Naive thymus-derived CD4-positive, alpha-beta T cell (primary cell): ENCODE measurements at regions of chr1 and their contacts with region 1.

Region 1: DNA sequence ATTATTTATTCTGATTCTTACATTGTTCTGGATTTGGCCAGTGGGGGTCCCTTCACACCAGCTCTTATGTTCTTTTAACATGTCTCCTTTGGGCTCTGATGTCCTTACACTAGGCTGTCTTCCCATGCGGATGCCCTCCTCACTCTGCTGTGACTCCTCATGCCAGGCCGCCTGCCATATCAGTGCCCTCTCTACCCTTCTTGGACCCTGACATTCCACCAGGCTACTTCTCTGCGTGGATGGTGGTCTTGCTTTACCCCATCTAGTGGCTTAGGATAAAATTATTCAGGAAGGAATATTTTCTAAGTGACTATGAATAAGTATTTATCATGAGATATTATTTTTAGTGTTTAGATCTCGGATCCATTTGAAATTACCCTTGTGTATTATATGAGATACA is 21.2 kb downstream of the ATF6 start:
- DNase-seq: no peak
- ATAC-seq: no peak
- H3K4me3 ChIP-seq: no peak overlapping the region
- H3K4me3 Mint-ChIP-seq: no peak overlapping the region
- H3K27ac ChIP-seq: no peak overlapping the region
- H3K27ac Mint-ChIP-seq: peak overlapping the region in 1 of 9 donors; percentile 63
- H3K4me1 ChIP-seq: no peaks in the 10 kb centered on the region
- H3K4me1 Mint-ChIP-seq: peaks cover 0 to 18% (median 6%) of the 10 kb centered on the region in 7 donors
- H3K27me3 ChIP-seq: no peaks in the 10 kb centered on the region
- H3K27me3 Mint-ChIP-seq: no peaks in the 10 kb centered on the region

Region 2: DNA sequence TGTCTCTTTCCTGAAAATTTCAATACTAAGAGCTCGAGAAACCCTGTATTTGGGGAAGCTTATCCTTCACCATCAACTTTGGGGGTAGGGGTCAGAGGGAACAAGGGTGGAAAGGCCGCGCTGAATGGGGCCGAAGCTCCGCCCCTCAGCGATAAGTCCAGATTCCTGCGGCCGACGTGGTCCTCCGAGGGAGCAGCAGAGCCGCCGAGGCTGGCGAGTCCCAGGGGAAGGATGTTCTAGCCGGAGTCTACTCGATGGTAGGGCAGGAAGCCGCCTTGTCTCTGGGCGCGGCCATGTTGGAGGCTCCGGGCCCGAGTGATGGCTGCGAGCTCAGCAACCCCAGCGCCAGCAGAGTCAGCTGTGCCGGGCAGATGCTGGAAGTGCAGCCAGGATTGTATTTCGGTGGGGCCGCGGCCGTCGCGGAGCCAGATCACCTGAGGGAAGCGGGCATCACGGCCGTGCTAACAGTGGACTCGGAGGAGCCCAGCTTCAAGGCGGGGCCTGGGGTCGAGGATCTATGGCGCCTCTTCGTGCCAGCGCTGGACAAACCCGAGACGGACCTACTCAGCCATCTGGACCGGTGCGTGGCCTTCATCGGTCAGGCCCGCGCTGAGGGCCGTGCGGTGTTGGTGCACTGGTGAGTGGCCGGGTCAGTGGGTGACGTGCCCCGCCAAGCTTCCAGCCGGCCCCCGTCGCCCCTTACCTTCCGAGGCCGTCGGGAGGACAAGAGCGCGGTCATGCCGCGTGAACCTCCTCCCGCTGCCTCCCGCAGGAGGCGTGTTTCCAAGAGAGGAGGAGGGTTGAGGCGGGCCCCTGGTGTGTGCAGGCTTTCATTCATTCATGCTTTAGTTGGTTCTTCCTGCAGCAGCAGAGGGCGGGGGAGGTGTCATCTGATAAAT is 37.6 kb before region 1 on chr1 and contains the start of gene DUSP12:
- CTCF ChIA-PET with region 1: no interaction called
- POLR2A ChIA-PET with region 1: no interaction called
- intact Hi-C with region 1: no loop called
- DNase-seq: peak; percentile 69 to 86 (median 83)
- ATAC-seq: peak; percentile 99
- H3K4me3 ChIP-seq: peak within 1 kb of the TSS; percentile 86
- H3K4me3 Mint-ChIP-seq: peak within 1 kb of the TSS; percentile 96 to 100 (median 99)
- H3K27ac ChIP-seq: peak within 1 kb of the TSS; percentile 74
- H3K27ac Mint-ChIP-seq: peak within 1 kb of the TSS; percentile 83 to 99 (median 96)
- H3K4me1 ChIP-seq: peaks cover 10 to 12% of the 10 kb centered on the region in 2 donors
- H3K4me1 Mint-ChIP-seq: peaks cover 32 to 50% (median 43%) of the 10 kb centered on the region in 7 donors
- H3K27me3 ChIP-seq: no peaks in the 10 kb centered on the region
- H3K27me3 Mint-ChIP-seq: peaks cover 0 to 24% (median 5%) of the 10 kb centered on the region in 5 donors
- total RNA-seq, gene DUSP12: 16.1 to 31.4 (median 24.1) TPM

Region 3: GRCh38 chr1:161772397-161772796 is 15.0 kb before region 1 on chr1:
- CTCF ChIA-PET with region 1: interaction called, 5 read pairs
- POLR2A ChIA-PET with region 1: no interaction called
- intact Hi-C with region 1: loop called (anchors 1 to 2 kb)
- DNase-seq: peak in 1 of 9 donors; percentile 12
- ATAC-seq: peak; percentile 55
- H3K4me3 ChIP-seq: no peak overlapping the region
- H3K4me3 Mint-ChIP-seq: no peak overlapping the region
- H3K27ac ChIP-seq: peak overlapping the region; percentile 53
- H3K27ac Mint-ChIP-seq: no peak overlapping the region
- H3K4me1 ChIP-seq: peaks cover 38 to 67% of the 10 kb centered on the region in 2 donors
- H3K4me1 Mint-ChIP-seq: peaks cover 8 to 30% (median 15%) of the 10 kb centered on the region in 7 donors
- H3K27me3 ChIP-seq: no peaks in the 10 kb centered on the region
- H3K27me3 Mint-ChIP-seq: no peaks in the 10 kb centered on the region

Region 4: DNA sequence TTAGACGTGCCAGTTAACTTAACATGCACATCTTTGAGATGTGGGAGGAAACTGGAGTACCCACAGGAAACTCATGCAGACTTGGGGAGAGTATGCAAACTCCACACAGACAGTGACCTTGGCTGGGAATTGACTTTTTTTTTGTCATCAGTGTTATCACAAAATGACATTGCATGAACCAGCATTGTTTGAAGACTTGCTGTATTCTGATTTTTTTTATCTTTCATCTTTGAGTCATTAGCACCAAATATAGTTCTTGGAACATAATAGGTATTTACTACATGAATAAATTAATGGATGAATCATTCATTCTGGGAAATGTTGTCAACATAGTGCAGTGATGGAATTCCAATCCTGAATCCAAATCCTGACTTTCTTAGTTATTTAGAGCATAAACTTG is 55.8 kb after region 1 on chr1:
- CTCF ChIA-PET with region 1: no interaction called
- POLR2A ChIA-PET with region 1: no interaction called
- intact Hi-C with region 1: no loop called
- DNase-seq: no peak
- ATAC-seq: no peak
- H3K4me3 ChIP-seq: no peak overlapping the region
- H3K4me3 Mint-ChIP-seq: no peak overlapping the region
- H3K27ac ChIP-seq: no peak overlapping the region
- H3K27ac Mint-ChIP-seq: no peak overlapping the region
- H3K4me1 ChIP-seq: no peaks in the 10 kb centered on the region
- H3K4me1 Mint-ChIP-seq: peaks cover 0 to 10% (median 3%) of the 10 kb centered on the region in 7 donors
- H3K27me3 ChIP-seq: no peaks in the 10 kb centered on the region
- H3K27me3 Mint-ChIP-seq: no peaks in the 10 kb centered on the region